ENCODE measurements at regions of chr9 and their contacts with region 1.

Region 1: DNA sequence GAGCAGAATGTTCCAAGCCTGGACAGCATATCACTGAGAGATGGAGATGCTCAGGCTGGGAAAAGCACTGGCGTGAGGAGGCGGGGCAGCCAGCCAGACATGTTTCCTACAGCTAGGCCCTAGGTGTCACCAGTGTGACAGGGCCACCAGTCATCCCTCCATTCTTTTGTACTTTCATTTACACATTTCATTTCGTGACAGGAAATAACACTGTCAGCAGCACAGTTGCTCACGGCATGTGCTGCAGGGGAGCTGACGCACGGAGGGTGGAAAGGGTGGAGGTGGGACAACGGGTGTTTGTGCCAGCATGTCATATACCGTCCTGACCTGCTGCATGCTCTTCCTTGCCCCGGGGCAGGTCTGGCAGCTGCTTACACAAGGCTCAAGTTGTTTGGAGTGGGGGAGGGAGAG is 14.8 kb upstream of the CEMIP2 start:
- DNase-seq: peak; percentile 94
- H3K4me3 Mint-ChIP-seq: peak overlapping the region; percentile 71
- H3K27ac Mint-ChIP-seq: peak overlapping the region; percentile 96
- H3K4me1 Mint-ChIP-seq: peaks cover 43% of the 10 kb centered on the region
- H3K27me3 Mint-ChIP-seq: no peaks in the 10 kb centered on the region

Region 2: GRCh38 chr9:70413798-70414775 is 1369.0 kb before region 1 on chr9 and contains the start of gene KLF9:
- CTCF ChIA-PET with region 1: no interaction called
- POLR2A ChIA-PET with region 1: no interaction called
- intact Hi-C with region 1: loop called (anchors 5 kb)
- DNase-seq: peak; percentile 96
- H3K4me3 Mint-ChIP-seq: peak within 1 kb of the TSS; percentile 97
- H3K27ac Mint-ChIP-seq: peak within 1 kb of the TSS; percentile 100
- H3K4me1 Mint-ChIP-seq: peaks cover 37% of the 10 kb centered on the region
- H3K27me3 Mint-ChIP-seq: peaks cover 2% of the 10 kb centered on the region
- total RNA-seq, gene KLF9: 23.7 to 24.5 TPM

Region 3: GRCh38 chr9:71795097-71795813 is 12.1 kb after region 1 on chr9:
- CTCF ChIA-PET with region 1: interaction called, 7 read pairs
- POLR2A ChIA-PET with region 1: interaction called, 4 read pairs
- intact Hi-C with region 1: loop called (anchors 1 kb)
- DNase-seq: no peak
- H3K4me3 Mint-ChIP-seq: peak overlapping the region; percentile 9
- H3K27ac Mint-ChIP-seq: peak overlapping the region; percentile 83
- H3K4me1 Mint-ChIP-seq: peaks cover 54% of the 10 kb centered on the region
- H3K27me3 Mint-ChIP-seq: no peaks in the 10 kb centered on the region

Region 4: DNA sequence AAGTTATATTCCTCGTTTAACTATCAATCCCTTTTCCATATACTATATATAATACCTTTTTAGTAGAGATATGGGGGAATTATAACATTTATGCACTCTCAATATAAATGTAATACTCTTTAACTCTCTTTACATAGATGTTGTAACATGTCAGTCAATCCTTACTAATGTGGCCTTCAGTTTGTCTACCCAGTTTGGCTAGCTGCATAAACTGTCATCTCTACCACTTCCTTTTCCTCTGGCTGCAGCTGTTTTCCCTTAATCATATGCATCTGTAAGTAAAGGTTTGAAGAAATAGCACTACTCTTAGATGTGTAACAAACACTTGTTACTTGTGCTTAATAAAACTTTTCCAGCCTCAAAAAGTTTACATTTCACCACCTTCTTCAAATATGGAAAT is 114.5 kb after region 1 on chr9:
- CTCF ChIA-PET with region 1: no interaction called
- POLR2A ChIA-PET with region 1: no interaction called
- intact Hi-C with region 1: loop called (anchors 5 kb)
- DNase-seq: no peak
- H3K4me3 Mint-ChIP-seq: no peak overlapping the region
- H3K27ac Mint-ChIP-seq: no peak overlapping the region
- H3K4me1 Mint-ChIP-seq: peaks cover 61% of the 10 kb centered on the region
- H3K27me3 Mint-ChIP-seq: no peaks in the 10 kb centered on the region

Region 5: GRCh38 chr9:72586388-72587130 is 803.4 kb after region 1 on chr9:
- CTCF ChIA-PET with region 1: no interaction called
- POLR2A ChIA-PET with region 1: no interaction called
- intact Hi-C with region 1: loop called (anchors 10 kb)
- DNase-seq: peak; percentile 44
- H3K4me3 Mint-ChIP-seq: no peak overlapping the region
- H3K27ac Mint-ChIP-seq: peak overlapping the region; percentile 50
- H3K4me1 Mint-ChIP-seq: peaks cover 47% of the 10 kb centered on the region
- H3K27me3 Mint-ChIP-seq: no peaks in the 10 kb centered on the region